MCF 10A (cell line): ENCODE measurements at regions of chr6 and their contacts with region 1.

Region 1: DNA sequence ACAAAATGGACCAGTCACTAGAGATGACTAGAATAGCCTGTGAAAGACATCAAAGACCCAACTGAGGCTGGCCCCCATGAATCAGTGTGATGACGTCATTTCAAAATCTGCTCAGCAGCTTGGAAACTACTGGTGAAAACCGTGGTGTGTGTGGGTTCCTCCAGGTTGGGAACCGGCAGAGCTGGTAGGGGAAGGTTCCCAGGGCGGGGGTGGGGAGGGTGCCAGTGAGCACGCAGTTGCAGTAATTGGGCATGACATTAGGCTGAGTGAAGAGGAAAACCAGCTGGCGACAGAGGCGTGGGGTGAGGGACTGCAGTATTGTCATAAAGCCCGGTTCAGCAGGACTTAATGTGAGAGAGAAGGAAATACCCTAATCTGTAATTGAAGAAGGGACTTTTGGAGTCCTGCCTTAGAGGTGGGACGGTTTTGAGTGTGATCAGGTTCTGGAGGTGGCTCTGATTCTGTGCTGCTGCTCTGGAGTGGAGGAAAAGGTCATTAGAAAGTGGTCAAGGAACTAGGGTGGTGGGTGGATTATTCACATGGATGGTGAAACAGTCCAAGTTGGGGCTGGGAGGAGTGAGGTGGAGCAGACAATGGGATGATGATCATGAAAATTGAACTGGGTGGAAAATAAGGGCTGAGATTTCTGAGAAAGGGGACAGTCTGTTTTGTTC is 52.0 kb upstream of the MTHFD1L start:
- DNase-seq: peak; percentile 21
- H3K4me3 Mint-ChIP-seq: peak overlapping the region; percentile 7
- H3K27ac Mint-ChIP-seq: peak overlapping the region; percentile 60
- H3K4me1 Mint-ChIP-seq: peaks cover 23% of the 10 kb centered on the region
- H3K27me3 Mint-ChIP-seq: no peaks in the 10 kb centered on the region
- CTCF ChIP-seq: no peak

Region 2: DNA sequence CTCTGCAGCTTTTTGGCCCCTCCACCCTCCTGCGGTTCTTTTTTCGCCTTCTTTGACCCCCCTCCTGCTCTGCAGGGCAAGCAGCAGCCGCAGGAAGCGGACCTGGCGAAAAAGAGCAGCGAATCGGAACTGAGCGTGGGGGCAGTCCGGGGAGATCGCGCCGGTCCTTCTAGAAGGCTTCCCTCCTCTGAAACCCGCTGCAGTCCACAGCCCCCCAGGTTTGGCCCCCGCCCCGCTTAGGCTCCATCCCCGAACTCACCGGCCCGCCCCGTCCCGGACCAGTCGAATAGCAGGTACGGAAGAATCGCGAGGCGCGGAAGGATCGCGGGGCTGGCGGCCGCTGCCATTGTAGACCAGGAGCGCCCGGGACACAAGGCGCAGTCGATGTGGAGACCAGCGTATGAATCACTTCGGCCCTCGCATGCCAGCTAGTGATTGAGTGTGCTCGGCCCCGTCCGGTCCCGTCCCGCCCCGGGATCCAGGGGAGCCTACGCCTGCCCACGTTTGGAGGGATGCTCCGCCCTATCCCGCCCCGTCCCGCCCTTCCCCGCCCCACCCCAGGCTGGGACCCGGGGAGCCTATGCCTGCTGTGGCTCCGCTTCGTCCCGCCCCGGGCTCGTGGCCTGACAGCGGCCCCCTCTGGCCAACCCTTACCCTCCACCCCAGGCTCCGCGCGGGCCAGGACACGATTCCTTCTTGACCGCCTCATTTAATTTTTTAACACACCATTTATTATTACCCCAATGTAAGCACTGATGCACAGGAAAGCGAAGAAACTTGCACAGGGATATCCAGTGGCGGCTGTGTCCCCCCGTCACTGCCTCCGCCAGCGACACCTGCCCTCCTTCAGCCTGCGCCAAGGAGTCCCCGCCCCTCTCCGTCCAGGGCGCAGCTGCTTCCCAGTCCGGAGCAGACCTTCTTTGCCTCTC is 744.5 kb before region 1 on chr6 and contains the start of gene ULBP3:
- CTCF ChIA-PET with region 1: interaction called, 3 read pairs
- POLR2A ChIA-PET with region 1: interaction called, 4 read pairs
- intact Hi-C with region 1: loop called (anchors 1 kb)
- DNase-seq: peak; percentile 98
- H3K4me3 Mint-ChIP-seq: peak within 1 kb of the TSS; percentile 77
- H3K27ac Mint-ChIP-seq: no peak within 1 kb of the TSS
- H3K4me1 Mint-ChIP-seq: peaks cover 28% of the 10 kb centered on the region
- H3K27me3 Mint-ChIP-seq: no peaks in the 10 kb centered on the region
- CTCF ChIP-seq: peak; percentile 34
- total RNA-seq, gene ULBP3: 4.9 and 6.3 TPM in 2 replicates

Region 3: DNA sequence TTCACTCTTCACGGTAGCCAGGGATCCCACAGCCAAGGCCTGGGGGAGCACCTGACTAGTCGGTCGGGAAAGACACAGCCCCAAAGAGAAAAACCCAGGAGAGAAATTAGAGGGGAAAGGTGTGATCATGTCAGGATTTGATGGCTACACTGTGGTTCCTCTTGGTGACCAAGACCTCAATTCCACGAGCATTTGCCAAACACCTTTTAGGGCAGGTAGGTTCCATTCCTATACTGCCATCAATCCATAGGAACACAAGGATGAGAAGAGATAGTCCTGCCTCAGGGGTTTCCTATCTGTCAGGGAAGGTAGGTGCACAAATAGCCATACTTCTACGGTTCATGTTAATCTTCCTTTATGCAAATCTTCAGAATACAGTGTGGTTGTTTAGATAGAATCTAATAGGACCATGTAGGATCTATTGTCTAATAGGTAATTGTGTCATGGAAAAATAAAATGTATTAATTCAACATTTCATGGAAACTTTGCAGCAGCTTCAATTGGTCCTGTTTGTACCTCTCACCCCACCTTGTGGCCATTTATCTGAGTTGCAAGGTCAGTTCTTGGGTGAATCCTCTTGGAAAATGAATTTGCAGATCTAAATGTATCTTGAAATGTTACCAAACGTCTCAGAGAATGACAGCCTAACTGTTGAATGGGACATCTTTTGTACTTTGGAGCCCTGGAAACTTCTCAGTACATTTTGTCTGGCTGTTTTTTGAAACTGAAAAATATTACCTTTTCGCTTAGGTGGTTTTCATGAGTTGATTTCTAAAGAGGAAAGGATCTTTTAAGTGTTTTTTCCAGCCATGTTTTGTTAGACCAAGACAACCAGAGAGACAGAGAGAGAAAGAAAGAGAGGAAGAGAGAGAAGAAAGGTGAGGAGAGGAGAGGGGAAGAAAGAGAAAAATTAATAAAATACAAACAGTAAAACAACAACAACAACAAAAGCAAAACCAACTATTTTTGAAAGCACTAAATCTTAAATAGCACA is 478.4 kb before region 1 on chr6:
- CTCF ChIA-PET with region 1: no interaction called
- POLR2A ChIA-PET with region 1: no interaction called
- intact Hi-C with region 1: loop called (anchors 2 kb)
- DNase-seq: peak; percentile 76
- H3K4me3 Mint-ChIP-seq: no peak overlapping the region
- H3K27ac Mint-ChIP-seq: peak overlapping the region; percentile 4
- H3K4me1 Mint-ChIP-seq: peaks cover 18% of the 10 kb centered on the region
- H3K27me3 Mint-ChIP-seq: no peaks in the 10 kb centered on the region
- CTCF ChIP-seq: peak; percentile 82

Region 4: DNA sequence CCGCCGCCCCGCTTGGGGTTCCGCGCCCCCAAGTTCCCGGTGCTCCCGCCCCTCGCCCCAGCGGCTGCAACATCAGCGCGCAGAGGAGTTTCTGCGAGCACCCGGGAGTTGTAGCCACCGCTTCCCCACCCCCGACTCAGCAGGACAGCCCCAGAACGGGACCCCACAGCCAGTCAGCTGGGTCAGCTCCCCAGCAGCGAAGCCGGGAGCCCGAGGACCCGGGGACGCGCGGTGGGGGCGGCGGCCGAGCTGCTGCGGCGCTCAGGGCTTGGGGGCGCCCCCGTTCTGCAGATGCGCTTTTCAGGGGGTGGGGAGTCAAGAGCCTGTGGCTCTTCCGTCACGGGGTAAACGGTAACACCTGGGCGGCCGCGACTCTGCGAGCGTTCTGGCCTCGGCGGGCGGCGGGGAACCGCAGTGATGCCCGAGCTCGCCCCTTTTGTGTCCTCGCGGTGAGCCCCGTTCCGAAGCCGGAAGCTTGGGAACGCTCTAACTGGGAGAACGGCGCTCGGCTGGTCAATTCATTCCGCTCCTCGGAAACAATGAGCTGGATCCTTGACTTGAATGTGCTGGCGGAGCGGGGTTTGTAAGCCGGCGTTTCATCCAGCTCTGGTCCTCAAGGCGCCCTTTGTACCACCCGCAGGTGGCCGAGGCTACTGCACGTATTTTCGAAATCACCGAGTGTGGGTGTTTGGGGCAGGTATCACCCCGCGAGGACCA is 213.0 kb before region 1 on chr6:
- CTCF ChIA-PET with region 1: interaction called, 11 read pairs
- POLR2A ChIA-PET with region 1: interaction called, 4 read pairs
- intact Hi-C with region 1: loop called (anchors 1 kb)
- DNase-seq: peak; percentile 80
- H3K4me3 Mint-ChIP-seq: peak overlapping the region; percentile 85
- H3K27ac Mint-ChIP-seq: no peak overlapping the region
- H3K4me1 Mint-ChIP-seq: no peaks in the 10 kb centered on the region
- H3K27me3 Mint-ChIP-seq: no peaks in the 10 kb centered on the region
- CTCF ChIP-seq: peak; percentile 49

Region 5: DNA sequence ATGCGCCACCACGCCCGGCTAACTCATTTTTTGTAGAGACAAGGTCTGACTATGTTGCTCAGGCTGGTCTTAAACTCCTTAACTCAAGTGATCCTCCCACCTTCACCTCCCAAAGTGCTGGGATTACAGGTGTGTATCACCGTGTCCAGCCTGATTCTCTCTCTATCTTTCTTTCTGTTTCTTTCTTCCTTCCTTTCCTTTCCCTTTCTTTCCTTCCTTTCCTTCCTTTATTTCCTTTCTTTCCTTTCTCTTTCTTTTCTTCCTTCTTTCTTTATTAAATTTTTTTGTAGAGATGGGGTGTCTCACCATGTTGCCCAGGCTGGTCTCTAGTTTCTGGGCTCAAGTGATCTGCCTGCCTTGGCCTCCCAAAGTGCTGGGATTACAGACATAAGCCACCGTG is 13.3 kb after region 1 on chr6:
- CTCF ChIA-PET with region 1: interaction called, 19 read pairs
- POLR2A ChIA-PET with region 1: no interaction called
- intact Hi-C with region 1: no loop called
- DNase-seq: no peak
- H3K4me3 Mint-ChIP-seq: no peak overlapping the region
- H3K27ac Mint-ChIP-seq: no peak overlapping the region
- H3K4me1 Mint-ChIP-seq: no peaks in the 10 kb centered on the region
- H3K27me3 Mint-ChIP-seq: no peaks in the 10 kb centered on the region
- CTCF ChIP-seq: no peak

Region 6: GRCh38 chr6:150865406-150866146 is 52.1 kb after region 1 on chr6 and contains the start of gene MTHFD1L:
- CTCF ChIA-PET with region 1: interaction called, 28 read pairs
- POLR2A ChIA-PET with region 1: no interaction called
- intact Hi-C with region 1: loop called (anchors 1 kb)
- DNase-seq: peak; percentile 83
- H3K4me3 Mint-ChIP-seq: peak within 1 kb of the TSS; percentile 98
- H3K27ac Mint-ChIP-seq: peak within 1 kb of the TSS; percentile 90
- H3K4me1 Mint-ChIP-seq: peaks cover 13% of the 10 kb centered on the region
- H3K27me3 Mint-ChIP-seq: no peaks in the 10 kb centered on the region
- CTCF ChIP-seq: peak; percentile 59
- total RNA-seq, gene MTHFD1L: 82.4 and 110 TPM in 2 replicates

Region 7: GRCh38 chr6:151340219-151340978 is 526.9 kb after region 1 on chr6:
- CTCF ChIA-PET with region 1: no interaction called
- POLR2A ChIA-PET with region 1: no interaction called
- intact Hi-C with region 1: loop called (anchors 2 kb)
- DNase-seq: no peak
- H3K4me3 Mint-ChIP-seq: no peak overlapping the region
- H3K27ac Mint-ChIP-seq: no peak overlapping the region
- H3K4me1 Mint-ChIP-seq: no peaks in the 10 kb centered on the region
- H3K27me3 Mint-ChIP-seq: no peaks in the 10 kb centered on the region
- CTCF ChIP-seq: no peak